Esophagus muscularis mucosa (tissue), 4 donors: ENCODE measurements at regions of chr7 and their contacts with region 1.

Region 1: DNA sequence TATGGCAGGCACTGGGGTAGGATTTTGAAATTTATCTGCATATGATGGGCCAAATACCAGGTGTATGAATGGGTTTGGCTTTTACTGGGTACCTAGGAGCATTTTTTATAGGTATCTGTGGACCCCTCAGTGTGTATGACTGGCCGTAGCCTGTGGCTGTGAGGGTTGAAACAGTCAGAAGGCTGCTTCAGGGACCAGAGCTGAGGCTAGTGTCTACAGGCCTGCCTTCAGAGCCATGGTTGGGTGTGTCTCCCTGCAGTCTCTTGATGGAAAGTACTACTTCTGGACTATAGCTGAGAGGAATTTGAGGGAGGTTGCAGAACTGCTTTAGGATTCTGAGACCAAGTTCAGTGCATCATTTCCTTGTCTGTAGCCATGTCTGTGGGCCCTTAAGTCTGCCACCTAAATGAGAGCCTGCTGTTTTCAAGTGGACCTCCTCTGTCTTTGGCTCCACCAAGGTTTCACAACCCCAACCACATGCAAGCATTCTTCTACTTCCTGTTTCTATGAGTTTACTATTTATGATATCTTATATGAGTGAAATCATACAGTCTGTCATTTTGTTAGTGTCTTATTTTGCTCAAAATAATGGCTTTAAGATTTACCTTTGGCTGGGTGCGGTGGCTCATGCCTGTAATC is 19.9 kb upstream of the ZNF138 start:
- DNase-seq: peak; percentile 39
- H3K4me3 ChIP-seq: no peak overlapping the region
- H3K27ac ChIP-seq: no peak overlapping the region
- H3K4me1 ChIP-seq: no peaks in the 10 kb centered on the region
- H3K27me3 ChIP-seq: no peaks in the 10 kb centered on the region
- CTCF ChIP-seq: no peak
- EP300 ChIP-seq: no peak
- POLR2A ChIP-seq: no peak

Region 2: DNA sequence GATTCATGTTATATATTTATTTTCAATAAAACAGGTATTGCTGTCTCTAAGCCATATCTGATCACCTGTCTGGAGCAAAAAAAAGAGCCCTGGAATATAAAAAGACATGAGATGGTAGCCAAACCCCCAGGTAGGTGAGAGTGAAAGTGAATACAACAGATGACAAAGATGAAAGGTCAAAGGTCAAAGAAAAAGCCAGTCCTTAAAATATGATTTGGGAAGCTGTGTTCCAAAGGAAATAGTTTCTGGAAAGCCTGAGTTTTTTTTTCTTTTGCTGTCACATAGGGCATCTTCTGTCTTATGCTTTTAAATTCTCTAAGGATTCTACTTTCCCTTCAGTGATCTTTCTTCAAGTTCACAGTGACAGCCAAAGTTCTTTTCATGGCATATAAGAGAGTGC is 82.5 kb before region 1 on chr7:
- intact Hi-C with region 1: loop called (anchors 10 kb)
- DNase-seq: no peak
- H3K4me3 ChIP-seq: no peak overlapping the region
- H3K27ac ChIP-seq: no peak overlapping the region
- H3K4me1 ChIP-seq: no peaks in the 10 kb centered on the region
- H3K27me3 ChIP-seq: no peaks in the 10 kb centered on the region
- CTCF ChIP-seq: no peak
- EP300 ChIP-seq: no peak
- POLR2A ChIP-seq: no peak

Region 3: GRCh38 chr7:64876792-64877713 is 102.7 kb after region 1 on chr7:
- intact Hi-C with region 1: no loop called
- DNase-seq: peak; percentile 50
- H3K4me3 ChIP-seq: peak overlapping the region; percentile 37 to 58 (median 48)
- H3K27ac ChIP-seq: no peak overlapping the region
- H3K4me1 ChIP-seq: peaks cover 0 to 16% (median 14%) of the 10 kb centered on the region in 4 donors
- H3K27me3 ChIP-seq: peaks cover 0 to 10% (median 0%) of the 10 kb centered on the region in 4 donors
- CTCF ChIP-seq: no peak
- EP300 ChIP-seq: no peak
- POLR2A ChIP-seq: no peak